SK-N-SH (cell line): ENCODE measurements at regions of chr10 and their contacts with region 1.

Region 1: DNA sequence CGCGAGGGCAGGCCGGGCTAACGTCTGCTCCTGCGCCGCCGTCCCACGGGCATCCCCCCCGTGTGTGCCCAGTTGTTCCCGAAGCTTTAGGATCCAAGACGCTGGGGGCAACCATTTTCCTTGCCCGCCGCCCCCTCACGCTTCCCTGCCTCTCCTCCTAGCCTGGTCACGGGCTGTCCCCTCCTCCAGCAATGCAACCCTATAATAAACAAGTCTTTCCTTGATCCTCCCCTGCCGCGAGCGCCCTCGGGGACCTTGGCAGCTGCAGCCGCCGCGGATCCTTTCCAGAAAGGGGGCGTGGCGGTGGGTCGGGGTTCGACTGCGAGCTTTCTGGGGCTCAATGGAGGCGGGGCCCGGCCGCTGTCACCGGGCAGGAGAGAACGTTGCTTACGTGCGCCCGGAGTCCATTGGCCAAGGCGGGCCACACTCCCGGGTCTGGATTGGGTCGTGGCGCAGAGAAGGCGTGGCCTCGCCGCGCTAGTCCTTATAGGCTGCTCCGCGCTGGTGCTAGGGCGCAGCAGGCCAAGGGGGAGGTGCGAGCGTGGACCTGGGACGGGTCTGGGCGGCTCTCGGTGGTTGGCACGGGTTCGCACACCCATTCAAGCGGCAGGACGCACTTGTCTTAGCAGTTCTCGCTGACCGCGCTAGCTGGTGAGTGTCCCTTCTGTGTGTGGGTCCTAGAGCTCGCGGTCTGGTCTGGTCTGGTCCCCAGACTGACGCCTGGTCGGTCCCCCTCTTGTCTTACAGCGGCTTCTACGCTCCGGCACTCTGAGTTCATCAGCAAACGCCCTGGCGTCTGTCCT is at the start of gene DDIT4:
- DNase-seq: peak; percentile 99
- H3K4me3 ChIP-seq: peak within 1 kb of the TSS; percentile 82 to 98
- H3K27ac ChIP-seq: peak within 1 kb of the TSS; percentile 78 to 100
- H3K4me1 ChIP-seq: peaks cover 20 to 36% of the 10 kb centered on the region in 2 experiments; a peak in 3 of 4 replicates
- H3K27me3 ChIP-seq: no peaks in the 10 kb centered on the region
- CTCF ChIP-seq: no peak
- EP300 ChIP-seq: peak; percentile 43 to 80; a peak in 2 of 4 replicates
- RAD21 ChIP-seq: peak; percentile 35
- polyA plus RNA-seq, gene DDIT4: 24.9 and 30.4 TPM in 2 replicates

Region 2: DNA sequence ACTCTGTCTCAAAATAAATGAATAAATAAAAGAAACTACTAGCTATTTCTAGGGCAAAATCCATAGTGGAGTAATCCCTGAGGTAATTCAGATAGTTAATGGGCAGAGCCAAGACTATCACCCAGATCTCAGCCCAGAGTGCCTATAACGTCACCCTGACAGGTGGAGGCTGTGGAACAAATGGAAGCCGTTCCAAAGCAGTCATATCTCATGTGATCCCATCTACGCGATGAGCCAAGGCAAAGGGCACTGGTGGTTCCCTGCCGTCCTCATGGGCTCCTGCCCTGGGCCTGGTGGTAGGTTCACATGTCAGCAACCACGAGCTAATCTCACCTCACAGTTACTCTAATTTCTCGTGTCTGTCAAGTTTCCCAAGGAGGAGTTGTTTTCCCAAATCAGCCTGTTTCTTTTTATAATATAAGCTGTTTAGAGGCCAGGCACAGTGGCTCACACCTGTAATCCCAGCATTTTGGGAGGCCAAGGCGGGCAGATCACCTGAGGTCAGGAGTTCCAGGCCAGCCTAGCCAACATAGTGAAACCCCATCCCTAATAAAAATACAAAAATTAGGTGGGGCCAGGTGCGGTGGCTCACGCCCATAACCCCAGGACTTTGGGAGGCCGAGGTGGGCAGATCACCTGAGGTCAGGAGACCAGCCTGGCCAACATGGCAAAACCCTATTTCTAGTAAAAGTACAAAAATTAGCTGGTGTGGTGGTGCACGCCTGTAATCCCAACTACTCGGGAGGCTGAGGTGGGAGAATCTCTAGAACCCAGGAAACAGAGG is 35.0 kb before region 1 on chr10:
- CTCF ChIA-PET with region 1: interaction called, 18 read pairs
- POLR2A ChIA-PET with region 1: interaction called, 6 read pairs
- DNase-seq: no peak
- H3K4me3 ChIP-seq: no peak overlapping the region
- H3K27ac ChIP-seq: no peak overlapping the region
- H3K4me1 ChIP-seq: no peaks in the 10 kb centered on the region; a peak in 1 of 4 replicates
- H3K27me3 ChIP-seq: no peaks in the 10 kb centered on the region
- CTCF ChIP-seq: no peak
- EP300 ChIP-seq: no peak
- RAD21 ChIP-seq: no peak

Region 3: DNA sequence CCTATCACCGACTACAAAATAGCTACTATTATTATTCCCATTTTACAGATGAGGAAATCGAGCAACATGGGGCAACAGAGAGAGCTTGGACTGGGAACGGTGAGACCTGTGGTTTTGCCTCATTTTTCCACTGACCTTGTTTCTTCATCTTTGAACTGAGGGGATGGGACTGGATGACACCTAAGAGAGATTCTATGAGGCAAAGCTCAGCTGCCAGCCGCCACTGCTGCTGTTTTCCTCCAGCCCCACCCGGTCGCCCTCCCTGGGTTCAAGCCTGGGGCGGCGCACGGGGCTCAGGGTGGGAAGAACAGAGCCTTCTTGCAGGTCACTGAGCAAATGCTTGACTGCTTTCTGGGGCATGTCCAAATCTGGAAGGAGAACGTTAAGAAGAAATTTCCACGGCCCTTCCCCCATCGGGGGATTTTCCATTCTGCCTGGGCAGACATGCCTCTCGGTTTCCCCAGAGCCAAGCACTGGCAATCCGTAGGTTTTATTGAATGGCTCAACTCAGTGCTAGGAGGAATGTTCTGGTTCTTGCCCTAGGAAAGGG is 12.4 kb after region 1 on chr10:
- CTCF ChIA-PET with region 1: interaction called, 26 read pairs
- POLR2A ChIA-PET with region 1: interaction called, 22 read pairs
- DNase-seq: no peak
- H3K4me3 ChIP-seq: no peak overlapping the region
- H3K27ac ChIP-seq: no peak overlapping the region
- H3K4me1 ChIP-seq: no peaks in the 10 kb centered on the region
- H3K27me3 ChIP-seq: no peaks in the 10 kb centered on the region
- CTCF ChIP-seq: no peak
- EP300 ChIP-seq: no peak
- RAD21 ChIP-seq: no peak

Region 4: DNA sequence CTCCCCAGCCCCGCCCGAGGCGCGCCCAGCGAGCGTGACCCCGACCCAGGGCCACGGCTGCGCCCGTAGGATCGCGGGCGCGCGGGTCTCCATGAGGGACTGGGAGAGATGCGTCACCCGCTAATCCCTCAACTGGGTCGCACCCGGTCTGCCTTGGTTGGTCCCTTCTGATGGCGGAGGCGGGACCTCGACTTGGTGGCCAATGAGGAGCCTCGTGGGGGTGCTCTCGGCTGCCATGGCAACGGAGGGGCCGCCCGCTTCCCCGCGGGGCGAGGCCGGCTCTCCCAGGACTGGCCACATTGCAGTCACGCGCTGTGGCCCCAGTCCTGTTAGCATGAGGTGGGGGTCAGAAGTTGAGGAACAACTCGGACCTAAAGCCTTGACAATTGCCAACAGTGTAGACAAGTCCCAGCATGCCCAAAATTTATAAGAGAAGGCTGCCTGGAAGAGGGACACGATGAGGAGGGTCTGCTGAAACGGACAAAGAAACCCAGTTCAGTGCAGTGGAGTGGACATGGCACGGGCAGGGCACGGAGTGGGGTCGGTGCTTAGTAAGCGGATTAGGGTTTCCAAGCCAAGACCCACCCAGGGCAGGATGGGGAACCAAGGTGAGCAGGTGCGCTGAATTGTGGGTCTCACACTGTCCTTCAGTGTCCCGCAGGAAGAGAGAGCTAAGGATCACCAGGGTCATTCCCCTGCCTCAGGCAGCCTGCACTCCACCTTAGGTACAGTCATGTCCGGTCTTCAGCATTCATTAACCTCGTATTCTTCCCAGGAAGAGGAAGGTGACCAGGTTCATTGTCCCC is 24.6 kb after region 1 on chr10:
- CTCF ChIA-PET with region 1: interaction called, 26 read pairs
- POLR2A ChIA-PET with region 1: interaction called, 21 read pairs
- DNase-seq: peak; percentile 98
- H3K4me3 ChIP-seq: peak overlapping the region; percentile 64 to 71
- H3K27ac ChIP-seq: peak overlapping the region; percentile 55 to 86; a peak in 3 of 4 replicates
- H3K4me1 ChIP-seq: peaks cover 6 to 16% of the 10 kb centered on the region in 2 experiments; a peak in 2 of 4 replicates
- H3K27me3 ChIP-seq: no peaks in the 10 kb centered on the region
- CTCF ChIP-seq: no peak
- EP300 ChIP-seq: no peak
- RAD21 ChIP-seq: no peak

Region 5: DNA sequence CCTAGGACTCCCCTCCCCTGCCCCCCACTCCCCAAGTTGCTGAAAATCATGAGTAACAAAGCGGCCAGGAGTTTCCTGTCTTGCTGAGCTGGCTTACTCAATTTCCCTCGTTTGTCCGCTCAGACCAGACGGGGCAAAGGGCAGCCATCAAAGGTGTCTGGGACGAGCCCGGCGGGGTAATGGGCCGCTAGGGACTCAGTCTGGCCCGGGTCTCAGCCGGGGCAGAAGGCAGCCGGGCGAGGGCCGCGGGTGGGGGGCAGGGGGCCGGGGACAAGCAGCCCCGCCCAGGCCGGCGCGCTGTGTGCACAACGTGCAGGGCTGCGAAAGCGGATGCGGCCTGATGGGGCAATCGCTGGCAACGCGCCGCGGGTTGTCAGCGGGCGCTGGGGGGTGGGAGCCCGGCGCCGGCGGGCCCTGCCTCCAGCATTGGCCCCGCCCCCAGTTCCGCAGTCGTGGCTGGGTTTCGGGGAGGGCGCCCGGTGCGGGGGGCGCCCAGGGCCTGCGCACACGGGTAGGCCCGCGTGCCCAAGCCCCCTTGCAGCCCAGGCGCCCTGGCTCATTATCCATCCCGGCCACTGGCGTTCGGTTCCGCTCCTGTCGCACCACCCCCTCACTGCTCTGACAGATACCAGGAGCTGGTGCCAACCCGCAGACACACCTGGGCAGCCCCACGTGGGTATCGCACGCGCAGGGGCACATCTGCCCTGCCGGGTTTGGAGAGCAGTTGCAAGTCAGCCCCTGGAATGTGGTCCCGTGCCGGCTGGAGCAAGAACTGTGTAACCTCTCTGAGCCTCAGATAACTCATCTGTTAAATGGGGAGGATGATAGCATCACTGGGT is 46.0 kb after region 1 on chr10:
- CTCF ChIA-PET with region 1: interaction called, 31 read pairs
- POLR2A ChIA-PET with region 1: interaction called, 234 read pairs
- DNase-seq: peak; percentile 91
- H3K4me3 ChIP-seq: peak overlapping the region; percentile 20 to 43; a peak in 3 of 4 replicates
- H3K27ac ChIP-seq: peak overlapping the region; percentile 94 to 97
- H3K4me1 ChIP-seq: peaks cover 45 to 78% of the 10 kb centered on the region in 2 experiments
- H3K27me3 ChIP-seq: no peaks in the 10 kb centered on the region
- CTCF ChIP-seq: no peak
- EP300 ChIP-seq: peak; percentile 30 to 83; a peak in 2 of 4 replicates
- RAD21 ChIP-seq: no peak; the same call in 1 of the 2 replicates

Region 6: GRCh38 chr10:72337020-72337629 is 63.5 kb after region 1 on chr10:
- CTCF ChIA-PET with region 1: interaction called, 198 read pairs
- POLR2A ChIA-PET with region 1: interaction called, 234 read pairs
- DNase-seq: peak; percentile 84
- H3K4me3 ChIP-seq: no peak overlapping the region; a peak in 1 of 4 replicates
- H3K27ac ChIP-seq: peak overlapping the region in 1 of 2 experiments; percentile 99; a peak in 2 of 4 replicates
- H3K4me1 ChIP-seq: peaks cover 3 to 51% of the 10 kb centered on the region in 2 experiments
- H3K27me3 ChIP-seq: no peaks in the 10 kb centered on the region
- CTCF ChIP-seq: peak; percentile 93
- EP300 ChIP-seq: no peak
- RAD21 ChIP-seq: peak; percentile 93